Dendritic cell treated with granulocyte-macrophage colony-stimulating factor and Interleukin-4, amounts not matched to agents 40 ng/mL and 50 ng/mL, for 4 days (primary cell): ENCODE measurements at regions of chr9 and their contacts with region 1.

Region 1: DNA sequence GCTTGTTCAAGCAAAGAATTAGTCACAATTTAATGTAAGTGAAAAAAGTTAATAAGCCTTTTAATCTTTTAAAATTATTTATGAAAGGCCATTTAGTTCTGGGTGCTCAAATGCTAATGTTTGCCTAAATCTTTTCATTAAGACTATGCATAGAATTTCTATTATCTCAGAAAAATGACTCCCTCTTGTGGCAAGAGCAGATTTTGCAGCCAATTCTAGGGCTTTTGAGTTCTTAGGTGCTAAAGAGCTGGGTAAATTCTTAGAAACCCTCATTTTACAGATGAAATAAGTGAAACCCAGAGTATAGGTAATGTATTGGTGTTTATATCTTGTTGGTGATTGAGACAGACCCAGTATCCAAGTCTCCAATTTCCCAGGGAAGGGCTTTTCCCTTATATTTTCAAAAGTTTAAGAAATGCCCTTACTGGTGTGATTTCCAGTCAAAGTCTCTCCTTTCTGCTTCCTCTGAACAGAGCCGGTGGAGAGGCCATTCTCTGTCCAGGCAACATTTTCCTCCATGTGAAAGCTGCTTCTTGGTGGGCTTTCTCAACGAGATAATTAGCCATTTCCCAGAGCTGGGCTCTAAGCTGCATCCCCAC is 24.1 kb upstream of the PCSK5 start:
- H3K4me3 Mint-ChIP-seq: no peak overlapping the region
- H3K27ac Mint-ChIP-seq: no peak overlapping the region
- H3K4me1 Mint-ChIP-seq: peaks cover 27% of the 10 kb centered on the region
- H3K27me3 Mint-ChIP-seq: peaks cover 3% of the 10 kb centered on the region

Region 2: GRCh38 chr9:75185585-75186170 is 680.7 kb before region 1 on chr9:
- intact Hi-C with region 1: loop called (anchors 10 kb)
- H3K4me3 Mint-ChIP-seq: no peak overlapping the region
- H3K27ac Mint-ChIP-seq: no peak overlapping the region
- H3K4me1 Mint-ChIP-seq: peaks cover 6% of the 10 kb centered on the region
- H3K27me3 Mint-ChIP-seq: no peaks in the 10 kb centered on the region

Region 3: GRCh38 chr9:75265525-75265972 is 600.8 kb before region 1 on chr9:
- intact Hi-C with region 1: loop called (anchors 2 kb)
- H3K4me3 Mint-ChIP-seq: no peak overlapping the region
- H3K27ac Mint-ChIP-seq: no peak overlapping the region
- H3K4me1 Mint-ChIP-seq: no peaks in the 10 kb centered on the region
- H3K27me3 Mint-ChIP-seq: no peaks in the 10 kb centered on the region

Region 4: GRCh38 chr9:75490326-75490725 is 376.0 kb before region 1 on chr9:
- intact Hi-C with region 1: loop called (anchors 10 kb)
- H3K4me3 Mint-ChIP-seq: no peak overlapping the region
- H3K27ac Mint-ChIP-seq: no peak overlapping the region
- H3K4me1 Mint-ChIP-seq: no peaks in the 10 kb centered on the region
- H3K27me3 Mint-ChIP-seq: peaks cover 4% of the 10 kb centered on the region

Region 5: DNA sequence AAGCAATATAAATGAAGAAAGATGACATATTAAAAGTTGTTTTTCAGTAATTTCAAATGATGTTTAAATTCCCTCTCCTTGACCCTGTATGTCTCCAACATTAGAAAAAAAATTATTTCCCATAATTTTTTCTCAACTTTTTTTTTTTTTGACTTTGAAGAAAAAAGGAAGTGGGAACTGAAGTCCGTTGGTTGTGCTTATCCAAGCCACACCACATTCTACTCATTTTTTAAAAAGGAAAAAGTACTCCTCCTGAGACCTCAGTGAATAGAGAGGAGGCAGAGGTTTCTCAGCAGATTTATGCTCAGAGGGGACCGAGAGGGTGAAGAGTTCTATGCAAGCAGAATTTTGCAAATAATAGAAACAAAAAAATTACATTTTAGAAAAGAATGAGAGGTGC is 147.4 kb after region 1 on chr9:
- intact Hi-C with region 1: no loop called
- H3K4me3 Mint-ChIP-seq: no peak overlapping the region
- H3K27ac Mint-ChIP-seq: no peak overlapping the region
- H3K4me1 Mint-ChIP-seq: peaks cover 10% of the 10 kb centered on the region
- H3K27me3 Mint-ChIP-seq: no peaks in the 10 kb centered on the region

Region 6: DNA sequence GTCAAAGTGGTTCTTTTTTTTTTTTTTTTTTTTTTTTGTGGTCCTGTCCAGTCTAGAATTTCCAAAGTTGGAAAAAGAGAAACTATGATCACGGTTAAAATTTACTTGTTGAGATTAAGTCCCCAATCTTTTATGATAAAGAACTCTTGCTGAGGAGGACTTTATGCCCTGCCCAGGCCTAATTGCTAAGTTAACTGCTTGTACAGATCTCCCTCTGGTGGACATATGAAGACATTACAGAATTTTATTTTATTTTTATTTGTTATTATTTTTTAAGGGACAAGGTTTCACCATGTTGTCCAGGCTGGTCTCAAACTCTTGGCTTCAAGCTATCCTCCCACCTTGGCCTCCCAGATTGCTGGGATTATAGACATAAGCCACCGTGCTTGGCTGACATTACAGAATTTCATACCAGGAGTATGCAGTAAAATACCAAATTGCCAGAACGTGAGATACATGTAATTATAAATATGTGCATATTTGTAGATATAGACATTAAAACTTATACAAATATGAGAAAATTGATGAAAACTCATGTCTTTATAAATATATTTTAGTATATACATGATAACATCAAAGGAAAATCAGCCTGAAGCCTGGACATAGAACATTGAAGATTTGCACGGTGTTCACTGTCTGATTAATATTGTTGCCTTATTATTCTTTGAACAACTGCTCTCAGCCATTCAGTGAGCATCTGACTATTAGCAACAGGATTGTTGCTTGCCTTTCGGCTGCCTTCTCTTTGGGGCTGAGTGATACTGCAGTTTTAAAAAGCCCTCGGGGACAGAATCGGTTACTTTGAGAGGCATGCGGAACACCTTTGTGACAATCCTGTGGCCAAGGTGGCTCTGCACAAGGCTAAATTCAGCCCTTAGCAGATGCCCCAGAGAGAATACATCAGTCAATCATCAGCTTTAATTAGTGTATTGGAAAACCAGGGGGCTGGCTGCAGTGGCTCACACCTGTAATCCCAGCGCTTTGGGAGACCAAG is 436.9 kb after region 1 on chr9:
- intact Hi-C with region 1: loop called (anchors 2 kb)
- H3K4me3 Mint-ChIP-seq: no peak overlapping the region
- H3K27ac Mint-ChIP-seq: no peak overlapping the region
- H3K4me1 Mint-ChIP-seq: peaks cover 1% of the 10 kb centered on the region
- H3K27me3 Mint-ChIP-seq: peaks cover 4% of the 10 kb centered on the region